ENCODE measurements at regions of chr5 and their contacts with region 1.

Region 1: DNA sequence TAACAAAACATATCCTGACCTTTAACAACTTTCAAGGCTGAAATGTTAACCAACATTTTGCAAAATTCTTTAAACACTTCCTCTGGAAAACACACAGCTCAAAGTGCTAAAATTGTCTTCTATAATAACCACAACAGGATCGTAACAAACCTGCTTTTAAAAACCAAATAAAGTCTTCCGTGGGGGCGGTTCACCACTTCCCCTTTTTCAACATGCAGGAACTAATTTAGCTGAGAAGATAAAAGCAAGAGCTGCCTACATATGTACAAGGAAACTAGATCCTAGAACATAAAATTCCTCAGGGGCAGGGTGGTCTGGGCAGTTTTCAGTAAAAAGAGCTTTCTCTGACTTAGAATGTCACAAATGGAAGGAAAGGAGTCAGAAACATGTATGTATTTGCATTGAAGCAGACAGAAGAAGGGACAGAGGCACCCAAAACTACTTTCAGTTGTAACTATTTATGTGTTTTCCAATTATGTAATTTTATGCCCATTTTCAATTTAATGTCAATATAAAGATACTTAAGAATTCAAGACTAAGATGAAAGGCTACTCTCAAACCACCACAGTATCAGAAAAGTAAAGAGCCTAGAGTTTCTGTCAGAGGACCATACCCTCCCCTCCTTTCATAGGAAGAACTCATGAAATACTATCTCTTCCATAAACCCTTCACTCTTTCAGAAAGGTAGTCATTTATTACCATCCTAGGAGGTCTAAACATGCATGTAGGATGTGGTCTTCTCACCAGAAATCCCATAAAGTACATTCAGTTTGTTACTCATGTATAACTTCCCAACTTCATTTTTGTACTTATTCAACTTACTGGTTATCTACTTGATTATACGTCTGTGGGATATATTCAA is 185.9 kb upstream of the RASA1 start:
- DNase-seq: no peak
- ATAC-seq: peak; percentile 90
- H3K4me3 Mint-ChIP-seq: peak overlapping the region; percentile 79
- H3K27ac Mint-ChIP-seq: peak overlapping the region; percentile 97
- H3K4me1 Mint-ChIP-seq: peaks cover 57% of the 10 kb centered on the region
- H3K27me3 Mint-ChIP-seq: no peaks in the 10 kb centered on the region
- CTCF ChIP-seq: no peak

Region 2: GRCh38 chr5:86617756-86618576 is 463.8 kb before region 1 on chr5 and contains the start of gene COX7C:
- CTCF ChIA-PET with region 1: no interaction called
- POLR2A ChIA-PET with region 1: no interaction called
- intact Hi-C with region 1: loop called (anchors 2 kb)
- DNase-seq: peak; percentile 77
- ATAC-seq: peak; percentile 96
- H3K4me3 Mint-ChIP-seq: peak within 1 kb of the TSS; percentile 100
- H3K27ac Mint-ChIP-seq: peak within 1 kb of the TSS; percentile 99
- H3K4me1 Mint-ChIP-seq: peaks cover 28% of the 10 kb centered on the region
- H3K27me3 Mint-ChIP-seq: peaks cover 7% of the 10 kb centered on the region
- CTCF ChIP-seq: no peak
- total RNA-seq, gene COX7C: 486 and 584 TPM in 2 replicates

Region 3: GRCh38 chr5:87103596-87104287 is 22.0 kb after region 1 on chr5:
- CTCF ChIA-PET with region 1: no interaction called
- POLR2A ChIA-PET with region 1: interaction called, 6 read pairs
- intact Hi-C with region 1: loop called (anchors 1 kb)
- DNase-seq: no peak
- ATAC-seq: peak; percentile 99
- H3K4me3 Mint-ChIP-seq: peak overlapping the region; percentile 80
- H3K27ac Mint-ChIP-seq: peak overlapping the region; percentile 89
- H3K4me1 Mint-ChIP-seq: peaks cover 46% of the 10 kb centered on the region
- H3K27me3 Mint-ChIP-seq: no peaks in the 10 kb centered on the region
- CTCF ChIP-seq: no peak

Region 4: GRCh38 chr5:87121304-87122150 is 39.8 kb after region 1 on chr5:
- CTCF ChIA-PET with region 1: interaction called, 4 read pairs
- POLR2A ChIA-PET with region 1: interaction called, 18 read pairs
- intact Hi-C with region 1: loop called (anchors 1 kb)
- DNase-seq: no peak
- ATAC-seq: peak; percentile 82
- H3K4me3 Mint-ChIP-seq: peak overlapping the region; percentile 44
- H3K27ac Mint-ChIP-seq: peak overlapping the region; percentile 74
- H3K4me1 Mint-ChIP-seq: peaks cover 60% of the 10 kb centered on the region
- H3K27me3 Mint-ChIP-seq: no peaks in the 10 kb centered on the region
- CTCF ChIP-seq: no peak

Region 5: DNA sequence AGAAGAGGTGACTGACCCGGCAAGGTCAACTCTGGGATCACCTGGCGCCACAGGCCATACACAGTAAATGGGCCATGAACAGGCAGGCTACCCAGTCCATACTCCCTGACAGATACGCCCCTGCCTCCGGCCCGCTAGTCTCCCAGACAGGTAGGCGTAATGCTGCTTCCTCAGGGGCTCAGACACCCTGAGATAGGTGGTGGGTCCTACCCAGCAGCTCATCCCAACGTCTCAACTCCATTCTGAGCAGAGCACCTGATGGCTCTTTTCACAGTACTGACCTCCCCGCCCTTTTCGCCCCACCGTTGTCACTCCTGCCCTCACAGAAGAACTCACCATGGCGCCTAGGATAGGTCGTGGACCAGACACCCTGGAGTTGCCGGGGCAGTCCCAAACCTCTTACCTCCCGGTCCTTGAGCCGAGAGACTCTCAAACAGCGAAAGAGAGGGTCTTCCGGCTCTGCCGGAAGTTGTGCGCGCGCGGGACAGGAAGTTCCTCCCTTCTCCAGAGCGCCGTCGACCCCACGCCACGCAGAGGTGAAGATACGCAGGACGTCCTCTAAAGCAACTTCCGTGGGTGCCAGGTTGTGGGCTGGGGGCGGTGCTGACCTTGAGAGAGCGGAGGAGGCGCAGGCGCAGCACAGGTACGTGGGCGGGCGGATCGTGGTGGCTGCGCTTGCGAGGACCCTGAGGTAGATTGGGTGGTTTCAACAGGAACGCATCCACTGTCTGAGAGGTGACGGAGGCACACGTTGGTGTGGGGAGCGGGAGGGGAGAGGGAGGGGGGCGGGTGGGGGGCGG is 1186.8 kb after region 1 on chr5 and contains the start of gene TMEM161B:
- CTCF ChIA-PET with region 1: no interaction called
- POLR2A ChIA-PET with region 1: no interaction called
- intact Hi-C with region 1: loop called (anchors 5 kb)
- DNase-seq: peak; percentile 83
- ATAC-seq: peak; percentile 99
- H3K4me3 Mint-ChIP-seq: peak within 1 kb of the TSS; percentile 100
- H3K27ac Mint-ChIP-seq: peak within 1 kb of the TSS; percentile 96
- H3K4me1 Mint-ChIP-seq: peaks cover 48% of the 10 kb centered on the region
- H3K27me3 Mint-ChIP-seq: no peaks in the 10 kb centered on the region
- CTCF ChIP-seq: no peak
- total RNA-seq, gene TMEM161B: 26.4 and 31.1 TPM in 2 replicates

Region 6: DNA sequence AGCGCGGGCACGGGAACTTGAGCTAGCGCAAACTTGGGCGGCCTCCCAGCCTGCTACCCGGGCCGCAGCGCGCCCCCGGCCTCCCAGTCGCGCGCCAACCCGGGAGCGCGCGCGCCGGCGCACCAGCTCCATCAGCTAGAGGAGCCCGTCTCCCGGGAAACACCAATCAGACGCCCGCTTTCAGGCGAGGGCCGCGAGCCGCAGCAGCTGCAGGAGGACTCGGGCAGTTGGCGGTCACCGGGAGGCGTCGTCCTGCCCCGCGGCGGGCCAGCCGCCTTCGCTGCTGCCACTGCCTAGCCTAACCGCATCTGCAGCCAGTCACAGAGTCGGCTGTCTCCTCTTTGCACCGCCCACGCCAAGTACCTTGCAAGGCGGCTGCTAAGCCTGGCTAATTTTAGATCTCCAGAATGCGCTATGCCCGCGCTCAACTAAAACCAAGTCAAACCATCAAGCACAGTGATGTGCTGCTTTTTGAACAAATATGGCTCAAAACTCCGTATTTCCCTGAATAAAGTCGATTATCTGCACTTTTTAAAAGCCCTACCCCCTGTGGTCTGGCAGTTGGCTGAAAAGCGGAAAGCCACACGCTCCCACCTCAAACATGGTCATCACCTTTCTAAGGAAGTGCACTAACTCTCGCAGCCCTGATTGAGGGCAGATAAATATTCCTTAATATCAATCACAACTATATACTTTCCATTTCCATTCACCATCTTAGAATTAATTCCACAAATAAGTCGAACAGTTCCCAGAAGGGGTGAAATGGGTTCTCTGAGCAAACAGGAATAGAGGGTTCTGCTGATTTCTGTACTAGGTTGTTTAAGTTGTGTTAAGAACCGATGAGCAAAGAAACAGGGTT is 1579.4 kb after region 1 on chr5:
- CTCF ChIA-PET with region 1: no interaction called
- POLR2A ChIA-PET with region 1: no interaction called
- intact Hi-C with region 1: no loop called
- DNase-seq: no peak
- ATAC-seq: no peak
- H3K4me3 Mint-ChIP-seq: peak overlapping the region; percentile 73
- H3K27ac Mint-ChIP-seq: no peak overlapping the region
- H3K4me1 Mint-ChIP-seq: peaks cover 18% of the 10 kb centered on the region
- H3K27me3 Mint-ChIP-seq: peaks cover 62% of the 10 kb centered on the region
- CTCF ChIP-seq: no peak